A673 (cell line): ENCODE measurements at regions of chr13 and their contacts with region 1.

Region 1: GRCh38 chr13:27533155-27533643 is 82.8 kb upstream of the MTIF3 start:
- DNase-seq: peak; percentile 46
- H3K4me3 ChIP-seq: no peak overlapping the region
- H3K27ac ChIP-seq: no peak overlapping the region
- H3K4me1 ChIP-seq: no peaks in the 10 kb centered on the region
- H3K27me3 ChIP-seq: no peaks in the 10 kb centered on the region
- CTCF ChIP-seq: peak; percentile 95

Region 2: DNA sequence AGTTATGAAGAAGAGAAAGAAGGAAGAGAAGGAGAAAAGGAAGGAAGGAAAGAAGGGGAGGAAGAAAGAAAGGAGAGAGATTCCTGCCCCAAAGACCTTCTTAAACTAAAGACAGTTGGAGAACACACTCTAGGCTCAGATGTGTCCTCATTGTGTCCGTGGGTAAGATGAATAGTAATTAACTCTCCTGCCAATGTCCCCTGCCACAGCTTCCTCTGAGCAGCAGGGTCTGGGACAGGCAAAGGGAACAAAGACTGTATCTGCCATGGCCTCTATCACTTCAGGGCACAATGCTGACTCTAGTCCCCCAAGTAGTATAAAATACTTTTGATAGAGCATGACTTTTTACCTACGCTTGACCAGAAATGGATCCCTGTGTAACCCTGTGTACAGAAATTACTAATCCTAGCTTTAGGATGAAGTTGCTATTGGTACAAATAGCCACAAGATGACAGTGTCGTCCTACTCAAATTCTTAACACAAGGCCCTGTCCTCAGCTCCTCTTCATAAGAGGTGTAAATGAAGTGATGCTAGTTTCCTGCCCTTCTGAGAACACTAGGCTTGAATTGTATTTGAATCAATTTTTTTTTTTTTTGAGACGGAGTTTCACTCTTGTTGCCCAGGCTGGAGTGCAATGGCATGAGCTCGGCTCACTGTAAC is 586.4 kb before region 1 on chr13:
- CTCF ChIA-PET with region 1: interaction called, 13 read pairs
- POLR2A ChIA-PET with region 1: no interaction called
- intact Hi-C with region 1: no loop called
- DNase-seq: peak; percentile 48
- H3K4me3 ChIP-seq: no peak overlapping the region
- H3K27ac ChIP-seq: no peak overlapping the region
- H3K4me1 ChIP-seq: no peaks in the 10 kb centered on the region
- H3K27me3 ChIP-seq: no peaks in the 10 kb centered on the region
- CTCF ChIP-seq: peak; percentile 62

Region 3: GRCh38 chr13:27712421-27712820 is 179.2 kb after region 1 on chr13:
- CTCF ChIA-PET with region 1: no interaction called
- POLR2A ChIA-PET with region 1: no interaction called
- intact Hi-C with region 1: loop called (anchors 10 kb)
- DNase-seq: peak; percentile 30
- H3K4me3 ChIP-seq: no peak overlapping the region
- H3K27ac ChIP-seq: no peak overlapping the region
- H3K4me1 ChIP-seq: no peaks in the 10 kb centered on the region
- H3K27me3 ChIP-seq: peaks cover 35% of the 10 kb centered on the region
- CTCF ChIP-seq: peak; percentile 46

Region 4: DNA sequence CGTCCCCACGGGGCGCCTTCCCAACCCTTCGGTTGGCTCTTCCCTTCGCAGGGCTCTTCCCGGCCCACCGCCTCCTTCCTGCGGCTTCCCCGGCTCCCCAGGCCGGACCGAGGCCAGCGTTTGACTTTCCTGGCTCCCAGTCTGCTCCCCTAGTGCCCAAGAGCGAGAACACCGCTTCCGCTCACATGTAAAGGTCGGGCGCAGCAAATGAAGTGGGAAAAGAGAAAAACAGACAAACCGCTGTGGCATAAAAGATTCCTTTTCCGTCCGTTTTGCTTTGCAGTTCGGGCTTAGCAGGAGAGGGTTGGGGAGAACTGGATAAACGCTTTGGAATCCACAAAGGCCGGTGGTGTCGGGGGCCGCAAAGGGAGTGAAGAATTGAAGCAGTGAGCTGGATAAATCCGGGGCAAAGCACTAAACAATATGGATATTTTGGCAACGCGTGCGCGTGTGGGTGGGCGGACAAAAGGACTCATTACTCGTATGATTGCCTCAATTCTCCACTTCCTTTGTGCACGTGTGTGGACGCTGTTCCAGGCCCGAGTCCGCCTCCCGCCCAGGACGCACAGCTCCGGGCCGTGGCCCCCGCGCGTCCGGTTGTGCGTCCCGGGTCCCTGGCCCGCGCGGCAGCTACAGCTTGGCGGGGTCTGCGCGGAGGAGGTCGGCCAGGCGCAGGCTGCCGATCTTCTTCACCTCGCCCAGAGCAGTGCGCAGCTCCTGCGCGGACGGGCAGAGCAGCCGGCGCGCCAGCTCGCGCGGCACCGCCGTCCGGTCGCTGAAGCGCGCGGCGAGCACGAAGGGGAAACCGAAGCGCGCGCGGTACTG is 444.5 kb after region 1 on chr13:
- CTCF ChIA-PET with region 1: no interaction called
- POLR2A ChIA-PET with region 1: no interaction called
- intact Hi-C with region 1: no loop called
- DNase-seq: peak; percentile 22
- H3K4me3 ChIP-seq: no peak overlapping the region
- H3K27ac ChIP-seq: no peak overlapping the region
- H3K4me1 ChIP-seq: no peaks in the 10 kb centered on the region
- H3K27me3 ChIP-seq: peaks cover 100% of the 10 kb centered on the region
- CTCF ChIP-seq: no peak